Aorta (tissue), 5 donors: ENCODE measurements at regions of chr6 and their contacts with region 1.

Region 1: DNA sequence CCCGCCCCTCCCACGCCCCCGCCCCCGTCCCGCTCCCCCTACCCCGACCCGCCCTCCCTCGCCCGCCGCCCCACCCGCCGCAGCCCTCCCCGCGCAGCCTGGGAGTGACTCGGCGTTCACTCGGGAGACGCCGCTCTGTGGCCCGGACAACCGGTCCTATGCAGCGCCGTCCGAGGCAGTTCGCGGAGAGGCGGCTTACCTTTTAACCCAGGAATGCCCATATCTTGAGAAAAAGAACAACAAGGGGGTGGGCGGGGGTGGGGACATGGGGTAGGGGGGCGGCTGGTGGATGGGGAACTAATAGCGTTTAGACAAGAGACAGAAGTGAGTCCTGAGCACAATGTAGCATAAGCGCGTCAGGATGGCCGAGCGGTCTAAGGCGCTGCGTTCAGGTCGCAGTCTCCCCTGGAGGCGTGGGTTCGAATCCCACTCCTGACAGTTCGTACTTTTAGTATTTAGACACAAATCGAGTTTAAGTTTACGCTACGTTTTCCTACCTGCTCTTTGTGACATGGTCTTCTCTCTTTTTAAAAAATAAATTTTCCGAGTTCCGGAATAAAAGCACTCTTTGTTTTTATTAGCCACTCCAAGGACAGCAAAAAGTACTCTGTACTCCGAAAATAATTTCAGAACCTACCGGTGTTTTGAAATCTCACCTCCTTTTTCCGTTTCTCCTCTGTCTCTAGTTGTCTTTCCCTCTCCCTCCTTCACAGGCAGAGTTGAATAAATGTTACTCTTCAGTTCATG is 17.1 kb upstream of the HMGN4 start:
- DNase-seq: peak; percentile 93 to 94
- ATAC-seq: peak; percentile 96
- H3K4me3 ChIP-seq: peak overlapping the region; percentile 52 to 90
- H3K27ac ChIP-seq: peak overlapping the region; percentile 80 to 95
- H3K4me1 ChIP-seq: peaks cover 0 to 1% of the 10 kb centered on the region in 2 donors
- H3K27me3 ChIP-seq: no peaks in the 10 kb centered on the region

Region 2: GRCh38 chr6:26532699-26533531 is 11.9 kb after region 1 on chr6:
- intact Hi-C with region 1: loop called in 1 of 2 experiments (anchors 1 kb)
- DNase-seq: peak; percentile 92 to 94
- ATAC-seq: peak; percentile 88
- H3K4me3 ChIP-seq: peak overlapping the region; percentile 76 to 100
- H3K27ac ChIP-seq: peak overlapping the region; percentile 3 to 85
- H3K4me1 ChIP-seq: peaks cover 0 to 2% of the 10 kb centered on the region in 2 donors
- H3K27me3 ChIP-seq: no peaks in the 10 kb centered on the region

Region 3: DNA sequence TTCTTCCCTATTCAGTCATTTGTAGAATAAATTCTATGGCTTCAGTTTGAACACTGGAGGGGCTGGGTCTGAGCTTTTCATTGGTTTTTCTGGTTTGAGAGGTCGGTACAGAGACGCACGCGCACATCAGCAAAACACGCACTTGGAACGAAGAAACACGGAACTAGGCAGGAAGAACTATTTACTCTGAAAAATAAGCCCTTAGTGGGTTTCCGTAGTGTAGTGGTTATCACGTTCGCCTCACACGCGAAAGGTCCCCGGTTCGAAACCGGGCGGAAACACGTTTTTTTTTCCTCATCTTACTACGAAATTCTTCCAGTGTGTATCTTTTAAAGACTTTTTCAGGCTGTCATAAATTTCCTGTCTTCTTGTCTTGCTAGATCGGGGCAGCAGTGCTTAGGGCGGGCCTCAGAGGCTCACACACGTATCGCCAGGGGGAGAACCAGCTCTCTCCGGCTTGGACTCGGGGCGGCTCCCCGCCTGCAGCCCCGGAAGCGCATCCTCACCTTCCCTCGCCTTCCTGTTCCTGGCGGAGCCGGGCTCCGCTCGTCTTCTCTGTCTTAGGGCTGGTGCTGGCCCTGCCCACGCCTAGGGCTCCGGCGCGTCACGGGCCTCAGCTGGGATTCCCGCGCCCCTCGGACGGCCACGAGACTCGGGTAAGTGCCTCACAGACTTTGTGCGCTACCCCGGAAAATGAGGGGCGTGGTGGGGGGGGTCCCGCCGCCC is 17.0 kb after region 1 on chr6 and contains the start of gene HMGN4:
- intact Hi-C with region 1: loop called in 1 of 2 experiments (anchors 1 kb)
- DNase-seq: peak; percentile 88 to 91
- ATAC-seq: peak; percentile 94
- H3K4me3 ChIP-seq: peak within 1 kb of the TSS; percentile 73 to 79
- H3K27ac ChIP-seq: peak within 1 kb of the TSS; percentile 83 to 87
- H3K4me1 ChIP-seq: peaks cover 2 to 3% of the 10 kb centered on the region in 2 donors
- H3K27me3 ChIP-seq: no peaks in the 10 kb centered on the region
- total RNA-seq, gene HMGN4: 48.4 to 69.0 TPM